ENCODE measurements at regions of chr17 and their contacts with region 1.

Region 1: DNA sequence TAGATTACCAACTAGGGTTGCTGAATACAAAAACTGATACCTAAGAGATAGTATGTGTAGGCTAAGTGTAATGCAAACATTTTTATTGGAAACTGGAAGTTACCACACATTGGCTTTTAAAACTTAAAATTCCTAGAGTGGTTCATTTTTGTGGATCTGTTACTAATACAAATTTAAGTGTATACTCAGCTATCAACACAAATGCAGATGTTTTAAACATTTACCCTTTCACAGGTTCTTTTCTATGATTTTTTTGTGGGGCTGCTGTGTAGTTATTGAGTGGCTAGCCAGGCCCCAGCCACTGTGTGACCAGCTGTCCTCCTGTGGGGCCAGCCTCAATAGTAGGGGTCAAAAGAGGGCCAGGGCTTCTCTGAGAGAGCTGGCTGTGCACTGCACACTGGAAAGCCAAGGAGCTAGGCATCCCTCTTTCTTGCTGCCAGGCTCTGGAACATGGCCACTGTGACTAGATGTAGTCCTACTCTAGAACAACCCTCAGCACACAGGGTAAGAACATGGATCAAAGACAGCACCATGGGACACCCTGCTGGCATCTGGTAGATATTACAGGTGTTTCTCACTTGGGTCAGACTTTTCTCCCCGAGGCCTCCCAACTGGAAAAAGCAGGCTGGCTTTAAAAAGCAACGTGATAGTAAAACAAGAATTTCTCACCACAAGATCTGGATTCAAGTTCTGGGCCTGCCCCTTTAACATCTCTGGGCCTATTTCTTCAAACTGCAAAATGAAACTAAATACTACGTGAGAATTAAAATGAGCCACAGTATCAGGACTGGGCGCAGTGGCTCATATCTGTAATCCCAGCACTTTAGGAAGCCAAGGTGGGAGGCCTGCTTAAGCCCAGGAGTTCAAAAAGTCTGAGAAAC is 7.3 kb upstream of the VEZF1 start:
- DNase-seq: peak; percentile 71
- H3K4me3 ChIP-seq: no peak overlapping the region
- H3K27ac ChIP-seq: peak overlapping the region; percentile 40 to 52
- H3K4me1 ChIP-seq: peaks cover 3% of the 10 kb centered on the region
- H3K27me3 ChIP-seq: no peaks in the 10 kb centered on the region
- CTCF ChIP-seq: peak; percentile 45 to 89 (median 78)
- POLR2A ChIP-seq: no peak

Region 2: DNA sequence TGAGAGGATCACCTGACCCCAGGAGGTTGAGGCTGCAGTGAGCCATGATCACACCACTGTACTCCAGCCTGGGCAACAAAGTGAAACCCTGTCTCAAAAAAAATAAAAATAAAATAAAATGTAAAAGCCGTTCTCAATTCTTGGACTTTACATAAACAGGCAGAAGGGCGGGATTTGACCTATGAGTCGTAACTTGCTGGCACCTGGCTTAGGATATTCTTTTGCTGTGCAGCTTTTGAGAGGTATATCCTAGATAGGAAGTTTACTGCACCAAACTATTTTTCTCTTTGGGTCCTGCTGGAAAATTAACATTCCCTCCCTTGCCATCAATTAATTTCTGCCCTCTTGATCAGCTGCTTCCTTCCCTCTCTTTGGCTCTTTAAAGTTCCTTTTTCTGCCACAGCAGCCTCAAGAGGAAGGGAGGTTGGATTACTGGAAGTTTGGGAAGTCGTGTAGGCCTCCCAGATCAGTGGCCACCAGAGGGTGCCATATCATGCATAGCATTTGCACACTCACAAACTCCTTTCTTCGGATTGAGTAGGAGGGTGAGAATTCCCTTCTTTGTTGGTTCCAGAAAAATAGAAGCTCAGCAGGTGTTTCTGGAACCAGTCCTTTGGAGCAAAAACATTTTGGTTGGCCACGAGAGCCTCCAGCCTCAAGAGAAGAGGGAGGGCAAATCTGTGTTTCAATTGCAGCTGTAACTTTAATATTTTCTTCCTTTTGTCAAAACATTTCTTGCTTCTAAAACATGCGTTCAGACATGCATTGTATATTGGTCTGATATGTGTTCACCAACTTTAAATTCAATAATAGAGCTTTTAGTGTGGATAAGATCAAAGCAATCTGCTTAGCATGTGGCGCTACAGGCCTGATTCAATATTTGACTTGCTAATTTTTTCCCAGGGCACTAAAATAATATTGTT is 397.5 kb before region 1 on chr17:
- intact Hi-C with region 1: loop called (anchors 10 kb)
- DNase-seq: peak; percentile 57
- H3K4me3 ChIP-seq: no peak overlapping the region
- H3K27ac ChIP-seq: no peak overlapping the region
- H3K4me1 ChIP-seq: no peaks in the 10 kb centered on the region
- H3K27me3 ChIP-seq: no peaks in the 10 kb centered on the region
- CTCF ChIP-seq: peak; percentile 60 to 82 (median 74)
- POLR2A ChIP-seq: no peak

Region 3: GRCh38 chr17:57662644-57663308 is 332.5 kb before region 1 on chr17:
- intact Hi-C with region 1: loop called (anchors 10 kb)
- DNase-seq: peak; percentile 76
- H3K4me3 ChIP-seq: peak overlapping the region; percentile 4 to 8
- H3K27ac ChIP-seq: peak overlapping the region; percentile 61 to 67
- H3K4me1 ChIP-seq: no peaks in the 10 kb centered on the region
- H3K27me3 ChIP-seq: no peaks in the 10 kb centered on the region
- CTCF ChIP-seq: peak in 3 of 4 experiments; percentile 13 to 24 (median 17)
- POLR2A ChIP-seq: no peak

Region 4: DNA sequence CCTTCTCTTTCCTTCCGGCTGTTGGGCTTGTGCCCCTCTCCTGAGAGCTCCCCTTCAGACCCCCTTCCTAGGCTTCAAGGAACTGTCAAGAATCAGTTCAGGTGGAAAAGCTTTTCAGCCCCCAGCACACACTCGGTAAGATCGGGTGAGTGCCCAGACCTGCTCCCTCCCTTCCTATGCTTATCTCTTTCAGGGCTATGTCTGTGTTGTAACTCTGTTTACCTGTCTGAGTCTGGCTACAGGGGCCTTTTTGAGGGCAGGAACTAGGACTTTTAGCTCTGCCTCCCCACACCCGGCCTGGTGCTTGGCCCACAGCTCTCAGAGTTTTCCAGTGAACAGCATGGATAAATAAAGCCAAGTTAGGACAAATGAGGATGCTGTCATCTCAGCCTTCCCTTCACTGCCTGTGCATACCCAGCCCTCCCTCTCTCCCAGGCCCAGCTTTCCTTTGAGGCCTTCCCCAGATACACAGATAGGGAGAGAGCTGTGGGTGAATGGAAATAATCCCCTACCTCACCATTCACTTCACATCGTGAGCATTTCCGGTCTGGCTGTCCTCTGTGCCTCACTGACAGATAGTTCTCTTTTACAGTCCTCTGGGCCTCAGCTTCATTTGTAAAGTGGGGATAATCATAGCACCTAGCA is 139.8 kb before region 1 on chr17:
- intact Hi-C with region 1: loop called (anchors 2 kb)
- DNase-seq: no peak
- H3K4me3 ChIP-seq: no peak overlapping the region
- H3K27ac ChIP-seq: peak overlapping the region; percentile 26 to 28
- H3K4me1 ChIP-seq: peaks cover 19% of the 10 kb centered on the region
- H3K27me3 ChIP-seq: no peaks in the 10 kb centered on the region
- CTCF ChIP-seq: no peak
- POLR2A ChIP-seq: no peak

Region 5: GRCh38 chr17:57875309-57876115 is 119.8 kb before region 1 on chr17:
- intact Hi-C with region 1: loop called (anchors 5 kb)
- DNase-seq: peak; percentile 52
- H3K4me3 ChIP-seq: no peak overlapping the region
- H3K27ac ChIP-seq: peak overlapping the region; percentile 57 to 70
- H3K4me1 ChIP-seq: peaks cover 21% of the 10 kb centered on the region
- H3K27me3 ChIP-seq: no peaks in the 10 kb centered on the region
- CTCF ChIP-seq: peak in 2 of 4 experiments; percentile 16 to 18
- POLR2A ChIP-seq: no peak

Region 6: DNA sequence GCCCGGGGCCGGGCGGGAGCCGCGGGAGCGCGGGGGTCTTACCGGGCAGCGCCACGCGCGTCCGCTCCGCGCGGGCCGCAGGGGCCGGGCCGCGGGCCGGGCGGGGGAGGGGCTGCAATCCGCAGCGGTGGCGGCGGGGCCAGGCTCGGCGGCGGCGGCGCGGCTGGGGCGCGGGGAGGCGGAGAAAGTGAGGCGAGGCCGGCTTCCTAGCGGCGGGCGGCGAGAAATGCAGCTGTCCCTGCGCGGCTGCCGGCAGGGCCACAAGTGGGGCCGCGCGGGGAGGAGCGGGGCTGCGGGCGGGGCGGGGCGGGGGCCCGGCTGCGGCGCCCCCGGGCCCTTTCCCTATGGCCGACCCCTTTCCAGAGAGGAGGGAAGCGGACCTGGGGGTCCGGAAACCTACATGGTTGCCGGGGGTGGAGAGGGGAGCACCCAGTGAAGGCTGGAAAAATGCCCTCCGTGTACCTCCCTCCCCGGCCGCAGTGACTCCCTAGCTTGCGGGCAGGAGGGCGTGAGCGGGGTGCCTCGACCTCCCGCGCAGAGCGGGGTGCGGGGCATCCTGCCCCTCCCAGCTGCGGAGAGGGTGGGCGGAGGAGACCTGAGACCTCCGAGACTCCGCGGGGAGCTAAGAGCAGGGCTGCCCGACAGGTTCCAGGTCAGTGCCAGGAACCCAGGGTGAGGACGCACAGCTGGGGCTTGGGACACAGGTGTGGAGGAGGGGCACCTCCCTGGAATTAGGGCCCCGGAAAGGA is 40.0 kb before region 1 on chr17 and contains the start of gene CUEDC1:
- intact Hi-C with region 1: no loop called
- DNase-seq: peak; percentile 67
- H3K4me3 ChIP-seq: peak within 1 kb of the TSS; percentile 93 to 94
- H3K27ac ChIP-seq: peak within 1 kb of the TSS; percentile 96 to 97
- H3K4me1 ChIP-seq: peaks cover 3% of the 10 kb centered on the region
- H3K27me3 ChIP-seq: no peaks in the 10 kb centered on the region
- CTCF ChIP-seq: peak in 2 of 4 experiments; percentile 26 to 48
- POLR2A ChIP-seq: no peak
- total RNA-seq, gene CUEDC1: 33.0 to 44.9 TPM